Activated CD4-positive, alpha-beta T cell treated with anti-CD3 and anti-CD28 coated beads, Interleukin-2, amount 10 ng/mL, durations not matched to agents 24 days and 14 days (primary cell): ENCODE measurements at regions of chr15 and their contacts with region 1.

Region 1: GRCh38 chr15:85667491-85668424 is 127.0 kb downstream of the KLHL25 start:
- DNase-seq: peak; percentile 89
- H3K4me3 Mint-ChIP-seq: peak overlapping the region; percentile 47
- H3K27ac Mint-ChIP-seq: peak overlapping the region; percentile 95
- H3K4me1 Mint-ChIP-seq: peaks cover 23% of the 10 kb centered on the region
- H3K27me3 Mint-ChIP-seq: no peaks in the 10 kb centered on the region

Region 2: DNA sequence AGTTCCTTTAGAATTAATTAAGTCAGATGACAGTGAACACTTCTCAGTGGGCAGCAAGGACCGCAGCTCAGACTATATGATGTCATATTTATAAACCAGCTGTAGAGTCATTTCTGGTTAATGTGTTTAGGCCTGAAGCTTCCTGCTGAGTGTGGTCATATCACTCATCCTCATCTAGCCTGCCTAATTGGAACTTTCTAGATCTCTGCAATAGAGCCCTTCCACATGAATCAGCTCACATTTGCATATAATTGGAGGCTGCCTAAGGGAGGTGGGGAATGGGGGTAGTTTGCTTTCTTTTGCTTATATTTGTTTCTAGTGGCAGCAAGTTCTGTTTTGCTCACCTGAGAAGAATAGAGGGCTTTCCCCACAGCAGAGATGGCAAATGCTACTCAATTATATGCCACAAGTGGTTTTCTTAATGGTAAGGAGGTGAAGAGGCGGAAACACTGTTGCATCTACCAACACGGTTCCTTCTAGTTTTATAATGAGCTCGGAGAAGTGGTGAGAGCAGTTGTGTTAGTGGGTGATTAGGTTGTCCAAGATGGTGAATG is 21.1 kb before region 1 on chr15:
- intact Hi-C with region 1: loop called (anchors 2 kb)
- DNase-seq: peak; percentile 77
- H3K4me3 Mint-ChIP-seq: peak overlapping the region; percentile 52
- H3K27ac Mint-ChIP-seq: peak overlapping the region; percentile 94
- H3K4me1 Mint-ChIP-seq: peaks cover 34% of the 10 kb centered on the region
- H3K27me3 Mint-ChIP-seq: no peaks in the 10 kb centered on the region

Region 3: DNA sequence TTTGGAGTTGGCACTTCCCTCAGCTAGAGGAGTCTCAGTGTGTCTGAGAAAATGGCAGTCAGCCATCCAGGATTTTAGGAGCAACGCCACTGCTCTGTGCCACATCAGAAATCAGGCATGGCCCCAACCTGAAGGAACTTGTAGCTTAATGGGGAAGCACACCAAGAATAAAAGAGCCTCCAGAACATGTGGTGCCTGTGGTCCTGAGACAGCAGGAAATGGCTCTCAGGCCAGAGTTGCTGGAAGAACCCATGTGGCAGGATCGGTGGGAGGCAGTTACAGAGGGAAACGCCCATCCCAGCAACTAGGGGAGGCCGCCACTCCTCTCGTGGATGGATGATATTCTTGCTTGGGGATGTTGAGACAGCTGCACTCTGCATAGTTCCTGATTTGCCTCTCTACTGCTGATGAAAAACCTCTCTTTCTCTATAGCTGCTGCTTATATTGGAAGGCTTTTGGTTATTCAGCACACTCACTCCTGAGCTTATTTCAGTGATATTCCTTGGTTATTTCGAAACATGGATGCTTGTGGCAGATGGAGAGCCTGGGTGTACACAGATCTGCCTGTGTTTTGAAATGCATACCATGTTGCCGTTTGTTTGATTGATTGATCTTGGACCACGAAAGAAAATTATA is 74.5 kb after region 1 on chr15:
- intact Hi-C with region 1: no loop called
- DNase-seq: no peak
- H3K4me3 Mint-ChIP-seq: no peak overlapping the region
- H3K27ac Mint-ChIP-seq: peak overlapping the region; percentile 20
- H3K4me1 Mint-ChIP-seq: peaks cover 2% of the 10 kb centered on the region
- H3K27me3 Mint-ChIP-seq: no peaks in the 10 kb centered on the region